Heart left ventricle (tissue), 16 donors: ENCODE measurements at regions of chr1 and their contacts with region 1.

Region 1: DNA sequence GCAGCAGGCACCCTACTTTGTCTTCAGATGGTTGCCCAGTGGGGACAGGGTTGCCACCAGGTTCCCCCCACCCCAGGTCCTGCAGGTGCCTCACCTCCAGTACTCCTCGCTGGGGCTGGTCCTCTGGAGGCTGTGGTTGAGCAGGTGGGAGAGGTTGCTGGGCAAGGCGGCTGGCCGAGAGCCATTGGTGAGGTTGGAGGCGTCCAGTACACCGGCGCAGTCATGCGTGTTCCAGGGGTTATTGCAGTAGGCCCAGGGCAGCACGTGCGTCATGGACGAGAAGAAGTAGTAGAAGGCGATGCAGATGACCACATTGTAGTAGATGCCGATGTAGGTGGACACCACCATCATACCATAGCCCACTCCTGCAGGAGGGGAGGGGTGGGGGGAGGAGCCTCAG is 16.9 kb downstream of the CCDC24 start:
- DNase-seq: no peak
- ATAC-seq: no peak
- H3K4me3 ChIP-seq: no peak overlapping the region
- H3K27ac ChIP-seq: no peak overlapping the region
- H3K4me1 ChIP-seq: peaks cover 0 to 5% (median under 1%) of the 10 kb centered on the region in 12 donors
- H3K27me3 ChIP-seq: no peaks in the 10 kb centered on the region
- CTCF ChIP-seq: no peak
- POLR2A ChIP-seq: no peak

Region 2: GRCh38 chr1:44036409-44037139 is 28.3 kb after region 1 on chr1:
- intact Hi-C with region 1: loop called in 9 of 10 experiments (anchors 1 to 5 kb)
- DNase-seq: peak in 4 of 5 donors; percentile 49 to 68 (median 57)
- ATAC-seq: peak; percentile 40 to 77 (median 66)
- H3K4me3 ChIP-seq: no peak overlapping the region
- H3K27ac ChIP-seq: peak overlapping the region in 9 of 12 donors; percentile 30 to 88 (median 61)
- H3K4me1 ChIP-seq: peaks cover 3 to 33% (median 20%) of the 10 kb centered on the region in 12 donors
- H3K27me3 ChIP-seq: no peaks in the 10 kb centered on the region
- CTCF ChIP-seq: peak; percentile 64 to 85 (median 74)
- POLR2A ChIP-seq: no peak

Region 3: GRCh38 chr1:44044071-44044801 is 36.0 kb after region 1 on chr1:
- intact Hi-C with region 1: loop called in 6 of 10 experiments (anchors 1 to 5 kb)
- DNase-seq: no peak
- ATAC-seq: no peak
- H3K4me3 ChIP-seq: no peak overlapping the region
- H3K27ac ChIP-seq: no peak overlapping the region
- H3K4me1 ChIP-seq: peaks cover 0 to 19% (median 0%) of the 10 kb centered on the region in 12 donors
- H3K27me3 ChIP-seq: peaks cover 0 to 7% (median 0%) of the 10 kb centered on the region in 9 donors
- CTCF ChIP-seq: no peak
- POLR2A ChIP-seq: no peak

Region 4: DNA sequence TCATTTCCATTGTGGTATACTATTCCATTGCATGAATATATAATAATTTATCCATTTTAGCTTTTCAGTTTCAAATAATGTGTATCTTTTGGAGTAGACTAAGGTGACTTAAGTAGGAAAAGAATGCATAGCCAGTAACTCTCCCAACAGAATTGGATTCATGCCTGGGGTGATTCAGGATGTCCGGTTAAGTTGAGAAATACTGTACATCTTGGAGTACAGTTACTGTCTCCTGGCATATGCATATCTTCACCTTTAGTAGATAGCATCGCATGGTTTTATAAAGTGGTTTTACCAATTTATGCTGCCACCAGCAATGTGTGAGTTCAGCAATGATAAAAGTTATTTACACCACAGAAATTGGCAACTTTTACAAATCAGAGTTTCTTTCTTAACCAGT is 41.6 kb after region 1 on chr1:
- intact Hi-C with region 1: loop called in 4 of 10 experiments (anchors 1 to 5 kb)
- DNase-seq: no peak
- ATAC-seq: no peak
- H3K4me3 ChIP-seq: no peak overlapping the region
- H3K27ac ChIP-seq: peak overlapping the region in 1 of 12 donors; percentile 54
- H3K4me1 ChIP-seq: peaks cover 0 to 33% (median 0%) of the 10 kb centered on the region in 12 donors
- H3K27me3 ChIP-seq: no peaks in the 10 kb centered on the region
- CTCF ChIP-seq: no peak
- POLR2A ChIP-seq: no peak